GM12878 (cell line): ENCODE measurements at regions of chr3 and their contacts with region 1.

Region 1: DNA sequence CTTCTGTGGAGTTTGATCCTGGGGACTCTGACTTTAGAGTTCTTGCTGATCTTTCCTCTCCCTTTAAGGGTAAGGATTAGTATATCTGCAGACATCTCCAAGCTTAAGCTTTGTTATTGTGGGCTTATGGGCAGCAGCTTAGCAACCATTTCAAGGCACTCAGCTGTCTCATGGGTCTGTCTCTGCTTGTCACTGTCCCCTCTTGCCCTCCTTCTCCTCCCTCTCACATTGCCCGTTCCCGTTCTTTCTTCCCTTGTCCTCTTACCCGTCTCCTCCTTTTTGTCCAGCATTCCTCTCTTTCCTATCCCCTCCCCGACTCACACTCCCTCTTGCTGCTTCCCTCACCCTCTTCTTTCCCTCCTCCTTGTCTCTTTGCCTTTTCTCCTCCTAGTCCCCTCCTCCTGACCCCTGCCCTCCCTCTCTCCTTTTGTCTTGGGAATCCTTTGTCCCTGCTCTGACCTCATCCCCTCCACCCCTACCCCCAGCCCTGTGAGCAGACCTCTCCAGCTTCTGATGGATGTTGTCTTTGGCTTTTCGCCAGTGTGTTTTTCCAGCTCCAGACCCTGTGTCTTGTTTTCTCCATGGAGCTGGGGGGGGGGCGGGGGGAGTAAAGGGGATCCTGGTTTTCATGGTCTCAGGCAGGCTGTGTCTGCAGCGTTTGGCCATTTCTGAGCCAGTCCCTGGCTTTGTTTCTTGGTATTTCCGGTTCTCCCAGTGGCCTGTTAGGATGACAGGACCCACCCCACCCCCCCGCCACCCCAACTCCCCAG is 47.9 kb upstream of the TRAK1 start:
- DNase-seq: no peak
- ATAC-seq: peak; percentile 62
- H3K4me3 ChIP-seq: no peak overlapping the region
- H3K27ac ChIP-seq: no peak overlapping the region
- H3K4me1 ChIP-seq: peaks cover 49% of the 10 kb centered on the region
- H3K27me3 ChIP-seq: no peaks in the 10 kb centered on the region
- CTCF ChIP-seq: no peak
- EP300 ChIP-seq: no peak
- POLR2A ChIP-seq: no peak
- RAD21 ChIP-seq: no peak

Region 2: DNA sequence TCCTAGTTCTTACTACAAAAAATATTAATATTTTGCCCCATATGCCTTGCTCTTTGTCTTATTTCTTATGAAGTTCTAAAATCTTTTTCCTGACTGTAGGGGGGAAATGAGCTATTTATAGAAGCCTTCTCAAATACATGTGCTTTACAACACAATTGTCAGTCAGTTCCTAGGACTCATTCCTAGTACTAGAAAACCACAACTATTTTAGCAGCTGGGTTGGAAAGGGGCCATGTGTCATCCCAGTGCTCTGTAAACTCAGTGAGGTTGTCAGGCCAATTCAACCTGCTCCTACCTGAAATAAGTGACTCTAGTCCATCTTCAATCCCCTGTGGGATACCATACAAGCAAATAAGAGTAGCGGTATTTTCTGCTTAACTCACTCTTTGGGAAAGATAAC is 235.1 kb before region 1 on chr3:
- CTCF ChIA-PET with region 1: no interaction called
- POLR2A ChIA-PET with region 1: no interaction called
- RAD21 ChIA-PET with region 1: no interaction called
- SMC1A ChIA-PET with region 1: no interaction called
- in situ Hi-C with region 1: no loop called
- intact Hi-C with region 1: no loop called
- DNase-seq: no peak
- ATAC-seq: no peak
- H3K4me3 ChIP-seq: no peak overlapping the region
- H3K27ac ChIP-seq: no peak overlapping the region
- H3K4me1 ChIP-seq: no peaks in the 10 kb centered on the region
- H3K27me3 ChIP-seq: no peaks in the 10 kb centered on the region
- CTCF ChIP-seq: no peak
- EP300 ChIP-seq: no peak
- POLR2A ChIP-seq: no peak
- RAD21 ChIP-seq: no peak

Region 3: GRCh38 chr3:42019144-42019952 is 23.9 kb before region 1 on chr3:
- CTCF ChIA-PET with region 1: interaction called, 15 read pairs
- POLR2A ChIA-PET with region 1: interaction called, 26 read pairs
- RAD21 ChIA-PET with region 1: interaction called, 21 read pairs
- SMC1A ChIA-PET with region 1: interaction called, 109 read pairs
- in situ Hi-C with region 1: no loop called
- intact Hi-C with region 1: loop called (anchors 5 kb)
- DNase-seq: no peak
- ATAC-seq: no peak
- H3K4me3 ChIP-seq: peak overlapping the region; percentile 33; the same call in 1 of the 2 replicates
- H3K27ac ChIP-seq: no peak overlapping the region
- H3K4me1 ChIP-seq: peaks cover 14% of the 10 kb centered on the region
- H3K27me3 ChIP-seq: no peaks in the 10 kb centered on the region
- CTCF ChIP-seq: no peak
- EP300 ChIP-seq: no peak
- POLR2A ChIP-seq: no peak
- RAD21 ChIP-seq: no peak

Region 4: DNA sequence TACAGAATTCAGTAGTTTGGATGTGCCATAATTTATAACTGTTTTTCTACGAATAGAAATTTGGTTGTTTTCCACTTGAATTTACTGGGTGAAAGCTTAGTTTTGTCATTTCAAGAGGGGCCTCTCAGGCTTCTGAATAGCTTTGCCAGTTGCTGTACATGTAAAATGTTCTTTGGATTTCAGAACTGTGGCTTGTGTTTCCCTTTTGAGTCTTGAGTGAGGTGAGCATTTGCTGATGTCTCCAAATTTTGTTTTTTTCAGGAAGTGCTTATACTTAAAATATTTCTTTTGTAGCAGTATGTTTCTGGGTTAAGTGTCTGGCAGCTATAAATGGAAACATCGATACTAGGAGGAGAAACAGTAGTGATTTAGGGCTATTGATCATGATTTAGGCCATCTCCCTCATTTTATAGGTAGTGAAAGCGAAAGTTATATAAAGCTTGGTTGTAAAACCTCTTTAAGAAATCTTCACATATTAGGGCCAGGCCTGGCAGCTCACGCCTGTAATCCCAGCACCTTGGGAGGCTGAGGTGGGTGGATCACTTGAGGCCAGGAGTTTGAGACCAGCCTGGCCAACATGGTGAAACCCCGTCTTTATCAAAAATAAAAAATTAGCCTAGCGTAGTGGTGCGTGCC is 38.7 kb after region 1 on chr3:
- CTCF ChIA-PET with region 1: no interaction called
- POLR2A ChIA-PET with region 1: interaction called, 5 read pairs
- RAD21 ChIA-PET with region 1: no interaction called
- SMC1A ChIA-PET with region 1: interaction called, 10 read pairs
- in situ Hi-C with region 1: no loop called
- intact Hi-C with region 1: no loop called
- DNase-seq: no peak
- ATAC-seq: peak; percentile 68
- H3K4me3 ChIP-seq: peak overlapping the region; percentile 17; the same call in 1 of the 2 replicates
- H3K27ac ChIP-seq: peak overlapping the region; percentile 76
- H3K4me1 ChIP-seq: peaks cover 44% of the 10 kb centered on the region
- H3K27me3 ChIP-seq: no peaks in the 10 kb centered on the region
- CTCF ChIP-seq: no peak
- EP300 ChIP-seq: no peak
- POLR2A ChIP-seq: no peak
- RAD21 ChIP-seq: no peak